AG04450 (cell line): ENCODE measurements at regions of chr2 and their contacts with region 1.

Region 1: DNA sequence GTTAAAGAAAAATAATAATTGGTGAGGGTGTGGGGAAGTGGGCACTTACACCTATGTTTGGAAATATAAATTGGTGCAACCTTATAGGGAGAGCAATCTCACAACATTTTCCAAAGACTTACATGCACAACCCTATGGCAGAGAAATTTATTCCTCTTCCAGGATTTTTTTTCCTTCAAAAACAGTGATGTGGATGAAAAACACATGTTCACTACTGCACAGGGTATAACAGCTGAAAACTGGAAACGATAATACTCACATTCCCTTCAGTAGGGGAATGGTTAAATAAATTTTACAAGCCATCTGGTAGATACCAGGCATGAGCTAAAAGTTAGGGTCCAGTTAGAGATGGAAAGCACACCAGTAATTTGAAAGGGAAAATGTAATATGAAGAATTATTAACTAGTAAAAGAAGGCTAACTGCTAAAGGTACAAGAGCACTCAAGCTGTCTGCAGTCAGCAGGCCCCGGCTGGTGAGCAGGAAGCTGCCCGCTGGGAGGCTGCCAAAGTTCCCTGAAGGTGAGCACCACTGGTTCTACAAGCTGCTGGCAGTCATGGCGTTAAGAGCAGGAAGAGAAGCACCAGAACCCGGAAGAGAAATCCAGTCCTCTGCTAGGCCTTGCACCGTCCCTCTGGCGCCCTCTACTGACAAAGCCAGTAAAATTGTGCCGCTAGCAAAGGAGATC is 28.4 kb upstream of the CASP8 start:
- DNase-seq: peak; percentile 73
- H3K4me3 ChIP-seq: no peak overlapping the region
- H3K27ac ChIP-seq: no peak overlapping the region
- H3K27me3 ChIP-seq: no peaks in the 10 kb centered on the region
- CTCF ChIP-seq: peak; percentile 92

Region 2: DNA sequence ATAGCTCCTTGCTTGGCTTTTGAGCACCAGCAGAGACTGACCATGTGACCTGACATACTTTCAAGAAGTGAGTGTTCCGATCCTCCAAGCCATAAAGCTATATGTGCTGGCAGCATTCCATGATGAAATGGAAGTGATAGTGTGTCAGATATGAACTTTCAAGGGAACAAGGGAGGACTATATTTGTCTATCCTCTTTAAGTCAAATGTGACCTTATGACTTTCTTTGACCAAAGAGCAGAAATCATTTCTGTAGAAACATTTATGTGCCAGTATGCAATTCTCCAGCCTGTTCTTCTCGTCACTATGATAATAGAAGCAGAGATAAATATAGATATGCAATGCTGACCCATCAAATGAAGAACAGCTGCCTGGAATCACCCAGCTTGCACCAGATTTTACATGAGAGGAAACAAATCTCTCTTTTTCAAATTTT is 174.8 kb before region 1 on chr2:
- CTCF ChIA-PET with region 1: no interaction called
- POLR2A ChIA-PET with region 1: no interaction called
- DNase-seq: no peak
- H3K4me3 ChIP-seq: no peak overlapping the region
- H3K27ac ChIP-seq: no peak overlapping the region
- H3K27me3 ChIP-seq: no peaks in the 10 kb centered on the region
- CTCF ChIP-seq: no peak

Region 3: GRCh38 chr2:201118121-201118960 is 113.6 kb before region 1 on chr2:
- CTCF ChIA-PET with region 1: interaction called, 11 read pairs
- POLR2A ChIA-PET with region 1: no interaction called
- DNase-seq: peak; percentile 37
- H3K4me3 ChIP-seq: peak overlapping the region; percentile 80
- H3K27ac ChIP-seq: peak overlapping the region; percentile 99
- H3K27me3 ChIP-seq: no peaks in the 10 kb centered on the region
- CTCF ChIP-seq: peak; percentile 51

Region 4: DNA sequence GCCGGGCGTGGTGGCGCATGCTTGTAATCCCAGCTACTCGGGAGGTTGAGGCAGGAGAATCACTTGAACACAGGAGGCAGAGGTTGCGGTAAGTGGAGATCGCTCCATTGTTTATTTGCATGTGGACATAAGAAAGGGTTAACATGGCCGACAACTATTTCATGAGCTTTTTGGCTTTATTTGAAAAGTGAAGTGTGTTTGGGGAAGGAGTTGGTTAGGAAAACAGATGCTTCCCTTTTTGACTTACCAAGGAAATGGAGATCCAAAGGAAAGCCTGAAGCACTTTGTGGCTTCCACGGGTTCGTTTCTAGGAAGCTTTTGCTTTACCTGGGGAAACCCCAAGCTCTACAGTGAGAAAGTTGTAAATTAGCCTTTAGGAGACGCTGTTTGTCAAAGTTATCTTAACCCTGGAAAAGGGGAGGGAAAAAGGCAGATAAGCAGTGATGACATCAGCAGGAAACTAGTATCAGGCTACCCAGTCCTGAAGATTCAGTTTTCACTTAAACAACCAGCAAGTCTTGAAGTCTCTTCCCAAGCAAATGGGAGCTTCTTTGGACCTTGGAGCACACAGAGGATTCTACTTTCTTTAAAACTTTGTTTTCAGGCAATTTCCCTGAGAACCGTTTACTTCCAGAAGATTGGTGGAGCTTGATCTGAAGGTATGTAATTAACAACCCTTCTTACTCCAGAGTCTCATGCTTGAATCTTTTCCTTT is 49.1 kb before region 1 on chr2 and contains the start of gene CASP10:
- CTCF ChIA-PET with region 1: interaction called, 28 read pairs
- POLR2A ChIA-PET with region 1: interaction called, 4 read pairs
- DNase-seq: no peak
- H3K4me3 ChIP-seq: peak within 1 kb of the TSS; percentile 45
- H3K27ac ChIP-seq: no peak within 1 kb of the TSS
- H3K27me3 ChIP-seq: peaks cover 3% of the 10 kb centered on the region
- CTCF ChIP-seq: peak; percentile 43
- polyA plus RNA-seq, gene CASP10: 1.5 and 2.6 TPM in 2 replicates

Region 5: GRCh38 chr2:201220102-201220570 is 11.8 kb before region 1 on chr2:
- CTCF ChIA-PET with region 1: interaction called, 73 read pairs
- POLR2A ChIA-PET with region 1: no interaction called
- DNase-seq: no peak
- H3K4me3 ChIP-seq: no peak overlapping the region
- H3K27ac ChIP-seq: no peak overlapping the region
- H3K27me3 ChIP-seq: no peaks in the 10 kb centered on the region
- CTCF ChIP-seq: no peak

Region 6: GRCh38 chr2:201313362-201313761 is 81.4 kb after region 1 on chr2:
- CTCF ChIA-PET with region 1: no interaction called
- POLR2A ChIA-PET with region 1: no interaction called
- DNase-seq: no peak
- H3K4me3 ChIP-seq: no peak overlapping the region
- H3K27ac ChIP-seq: no peak overlapping the region
- H3K27me3 ChIP-seq: no peaks in the 10 kb centered on the region
- CTCF ChIP-seq: no peak

Region 7: GRCh38 chr2:201363857-201364560 is 132.1 kb after region 1 on chr2:
- CTCF ChIA-PET with region 1: interaction called, 30 read pairs
- POLR2A ChIA-PET with region 1: no interaction called
- DNase-seq: no peak
- H3K4me3 ChIP-seq: no peak overlapping the region
- H3K27ac ChIP-seq: no peak overlapping the region
- H3K27me3 ChIP-seq: no peaks in the 10 kb centered on the region
- CTCF ChIP-seq: peak; percentile 82